ENCODE measurements at regions of chr16 and their contacts with region 1.

Region 1: GRCh38 chr16:46711106-46712058 is 21.9 kb downstream of the ORC6 start:
- DNase-seq: peak; percentile 70 to 82
- ATAC-seq: peak; percentile 96 to 97
- H3K4me3 ChIP-seq: peak overlapping the region in 1 of 4 donors; percentile 7
- H3K27ac ChIP-seq: peak overlapping the region; percentile 80 to 86 (median 84)
- H3K4me1 ChIP-seq: peaks cover 14 to 22% of the 10 kb centered on the region in 2 donors
- H3K27me3 ChIP-seq: no peaks in the 10 kb centered on the region
- CTCF ChIP-seq: no peak
- POLR2A ChIP-seq: no peak

Region 2: GRCh38 chr16:46629331-46630219 is 81.8 kb before region 1 on chr16:
- in situ Hi-C with region 1: no loop called
- intact Hi-C with region 1: no loop called
- DNase-seq: no peak
- ATAC-seq: peak in 1 of 2 donors; percentile 26
- H3K4me3 ChIP-seq: no peak overlapping the region
- H3K27ac ChIP-seq: no peak overlapping the region
- H3K4me1 ChIP-seq: no peaks in the 10 kb centered on the region
- H3K27me3 ChIP-seq: no peaks in the 10 kb centered on the region
- CTCF ChIP-seq: no peak
- POLR2A ChIP-seq: no peak

Region 3: DNA sequence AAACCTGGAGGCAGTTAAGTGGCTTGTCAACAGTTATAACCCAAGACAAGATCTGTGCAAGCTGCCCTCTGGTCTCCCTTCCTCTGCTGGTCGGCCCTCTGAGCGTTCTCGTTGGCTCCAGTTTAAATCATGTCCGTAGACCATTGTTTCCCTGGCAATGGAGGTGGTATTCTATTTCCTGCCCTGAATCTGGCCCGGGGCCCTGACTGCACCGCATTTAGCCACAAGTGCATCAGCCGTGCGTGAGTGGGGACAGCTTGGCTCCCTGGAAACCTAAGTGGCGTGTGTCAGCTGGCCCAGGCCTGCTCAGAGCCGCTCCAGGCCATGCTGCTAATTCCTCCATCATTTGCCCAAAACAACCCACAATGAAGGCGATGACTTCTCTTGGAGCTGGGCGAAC is 51.8 kb after region 1 on chr16:
- in situ Hi-C with region 1: no loop called
- intact Hi-C with region 1: loop called (anchors 2 kb)
- DNase-seq: peak; percentile 61 to 80
- ATAC-seq: peak; percentile 55 to 85
- H3K4me3 ChIP-seq: peak overlapping the region; percentile 23 to 44 (median 33)
- H3K27ac ChIP-seq: peak overlapping the region; percentile 78 to 93 (median 90)
- H3K4me1 ChIP-seq: peaks cover 19 to 25% of the 10 kb centered on the region in 2 donors
- H3K27me3 ChIP-seq: no peaks in the 10 kb centered on the region
- CTCF ChIP-seq: no peak
- POLR2A ChIP-seq: no peak

Region 4: GRCh38 chr16:46801428-46802049 is 90.2 kb after region 1 on chr16:
- in situ Hi-C with region 1: no loop called
- intact Hi-C with region 1: loop called (anchors 5 kb)
- DNase-seq: no peak
- ATAC-seq: peak in 1 of 2 donors; percentile 68
- H3K4me3 ChIP-seq: no peak overlapping the region
- H3K27ac ChIP-seq: no peak overlapping the region
- H3K4me1 ChIP-seq: peaks cover 0 to 3% of the 10 kb centered on the region in 2 donors
- H3K27me3 ChIP-seq: no peaks in the 10 kb centered on the region
- CTCF ChIP-seq: peak in 4 of 5 experiments; percentile 37 to 49 (median 48)
- POLR2A ChIP-seq: no peak

Region 5: GRCh38 chr16:46871587-46871986 is 160.2 kb after region 1 on chr16:
- in situ Hi-C with region 1: no loop called
- intact Hi-C with region 1: no loop called
- DNase-seq: no peak
- ATAC-seq: no peak
- H3K4me3 ChIP-seq: no peak overlapping the region
- H3K27ac ChIP-seq: no peak overlapping the region
- H3K4me1 ChIP-seq: no peaks in the 10 kb centered on the region
- H3K27me3 ChIP-seq: no peaks in the 10 kb centered on the region
- CTCF ChIP-seq: no peak
- POLR2A ChIP-seq: no peak

Measured in gastrocnemius medialis (tissue), 4 donors.